K562 (cell line): ENCODE measurements at regions of chr19 and their contacts with region 1.

Region 1: DNA sequence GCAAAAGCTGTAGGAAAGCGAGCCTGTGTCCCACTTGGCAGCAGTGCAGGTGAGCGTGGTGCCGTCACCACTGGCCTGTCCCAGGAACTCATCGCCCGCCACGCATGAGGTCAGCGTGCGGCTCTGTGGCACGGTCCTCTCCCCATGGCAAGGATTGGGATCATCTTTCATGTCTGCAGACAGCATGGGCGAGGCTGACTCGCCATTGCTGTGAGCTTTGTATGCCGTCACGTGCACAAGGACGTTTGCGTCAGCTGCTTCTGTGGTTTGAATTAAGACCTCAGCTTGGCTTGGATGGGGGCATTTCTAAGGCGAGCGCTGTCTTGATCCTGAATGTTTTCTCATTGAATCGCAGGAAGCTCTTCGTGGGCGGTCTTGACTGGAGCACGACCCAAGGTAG is 9.8 kb downstream of the DAZAP1 start:
- DNase-seq: no peak
- ATAC-seq: no peak
- H3K4me3 ChIP-seq: no peak overlapping the region
- H3K27ac ChIP-seq: no peak overlapping the region
- H3K4me1 ChIP-seq: peaks cover 24 to 64% of the 10 kb centered on the region in 2 experiments
- H3K27me3 ChIP-seq: no peaks in the 10 kb centered on the region
- CTCF ChIP-seq: no peak
- EP300 ChIP-seq: no peak
- POLR2A ChIP-seq: no peak
- RAD21 ChIP-seq: no peak

Region 2: DNA sequence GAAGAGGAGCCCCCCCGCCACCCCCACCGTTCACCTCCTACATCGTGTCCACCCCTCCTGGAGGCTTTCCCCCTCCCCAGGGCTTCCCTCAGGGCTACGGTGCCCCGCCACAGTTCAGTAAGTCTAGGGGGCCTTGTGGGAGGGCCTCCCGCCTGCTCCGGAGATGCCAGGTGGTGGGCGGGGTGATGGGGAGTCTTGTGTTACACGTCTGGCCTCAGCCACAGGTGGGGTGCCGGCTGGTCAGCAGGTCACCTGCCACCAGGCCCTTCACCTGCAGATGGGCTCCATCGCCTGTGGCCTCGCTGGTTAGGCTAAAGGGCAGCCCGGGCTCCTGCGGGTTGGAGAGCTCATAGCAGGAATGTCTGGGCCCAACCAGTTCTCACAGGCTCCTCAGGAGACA is 13.1 kb after region 1 on chr19:
- CTCF ChIA-PET with region 1: no interaction called
- POLR2A ChIA-PET with region 1: interaction called, 52 read pairs
- in situ Hi-C with region 1: no loop called
- intact Hi-C with region 1: no loop called
- DNase-seq: no peak
- ATAC-seq: no peak
- H3K4me3 ChIP-seq: no peak overlapping the region
- H3K27ac ChIP-seq: no peak overlapping the region
- H3K4me1 ChIP-seq: peaks cover 1 to 59% of the 10 kb centered on the region in 2 experiments; a peak in 4 of 5 replicates
- H3K27me3 ChIP-seq: no peaks in the 10 kb centered on the region
- CTCF ChIP-seq: no peak
- EP300 ChIP-seq: no peak
- POLR2A ChIP-seq: no peak
- RAD21 ChIP-seq: no peak